ENCODE measurements at regions of chr9 and their contacts with region 1.

Region 1: DNA sequence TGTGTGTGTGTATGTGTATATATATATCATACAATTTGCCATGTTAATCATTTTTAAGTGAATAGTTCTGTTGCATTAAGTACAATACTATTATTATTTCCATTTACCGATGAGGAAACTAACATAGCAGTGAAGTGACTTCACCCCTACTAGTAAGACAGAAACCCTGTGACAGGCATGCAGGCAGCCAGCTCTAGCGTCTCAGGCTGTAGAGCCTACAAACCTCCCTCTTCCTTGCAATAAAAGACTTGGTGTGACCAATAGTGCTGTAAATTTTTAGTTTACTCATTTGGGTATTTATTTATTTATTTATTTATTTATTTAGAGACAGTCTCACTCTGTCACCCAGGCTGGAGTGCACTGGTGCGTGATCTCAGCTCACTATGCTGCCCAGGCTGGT is 24.7 kb downstream of the FNBP1 start:
- DNase-seq: no peak
- H3K4me3 Mint-ChIP-seq: no peak overlapping the region
- H3K27ac Mint-ChIP-seq: peak overlapping the region; percentile 54
- H3K4me1 Mint-ChIP-seq: peaks cover 67% of the 10 kb centered on the region
- H3K27me3 Mint-ChIP-seq: no peaks in the 10 kb centered on the region

Region 2: GRCh38 chr9:129835021-129835871 is 183.0 kb before region 1 on chr9 and contains the starts of genes C9orf78 and USP20:
- CTCF ChIA-PET with region 1: no interaction called
- POLR2A ChIA-PET with region 1: no interaction called
- DNase-seq: peak; percentile 97
- H3K4me3 Mint-ChIP-seq: peak within 1 kb of the TSS; percentile 99
- H3K27ac Mint-ChIP-seq: peak within 1 kb of the TSS; percentile 96
- H3K4me1 Mint-ChIP-seq: peaks cover 59% of the 10 kb centered on the region
- H3K27me3 Mint-ChIP-seq: no peaks in the 10 kb centered on the region
- total RNA-seq, gene C9orf78: 61.6 to 66.2 TPM
- total RNA-seq, gene USP20: 86.4 to 87.6 TPM

Region 3: DNA sequence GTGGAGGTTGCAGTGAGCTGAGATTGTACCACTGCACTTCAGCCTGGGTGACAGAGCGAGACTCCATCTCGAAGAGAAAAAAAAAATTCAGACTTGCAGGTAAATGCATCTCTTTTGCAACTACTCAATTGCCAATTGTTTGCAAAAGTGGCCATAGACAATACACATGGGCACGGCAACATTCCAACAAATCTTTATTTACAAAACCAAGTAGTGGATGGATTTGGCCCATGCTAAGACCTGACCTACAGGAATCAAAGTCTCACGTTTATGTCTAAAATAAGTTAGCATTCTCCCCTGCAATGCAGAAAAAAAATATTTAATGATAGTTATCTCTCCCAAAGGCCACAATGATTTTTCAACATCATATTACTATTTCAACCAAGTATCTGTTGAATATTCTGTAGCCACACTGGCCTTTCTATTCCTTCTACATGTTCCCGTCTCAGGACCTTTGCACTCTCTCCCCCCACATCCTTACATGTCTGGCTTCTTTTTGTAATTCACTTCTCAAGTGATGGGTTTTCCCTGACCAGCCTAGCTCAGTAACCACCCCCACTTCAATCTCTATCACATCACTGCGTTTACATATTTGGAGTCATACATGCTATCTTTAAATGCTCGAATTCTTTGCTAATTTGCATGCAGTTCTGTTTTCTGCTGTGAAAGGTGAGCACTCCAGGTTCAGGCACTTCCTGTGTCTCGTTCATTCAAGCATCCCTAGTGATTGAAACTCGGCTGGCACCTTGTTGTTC is 29.5 kb before region 1 on chr9:
- CTCF ChIA-PET with region 1: no interaction called
- POLR2A ChIA-PET with region 1: interaction called, 11 read pairs
- DNase-seq: no peak
- H3K4me3 Mint-ChIP-seq: no peak overlapping the region
- H3K27ac Mint-ChIP-seq: peak overlapping the region; percentile 72
- H3K4me1 Mint-ChIP-seq: peaks cover 75% of the 10 kb centered on the region
- H3K27me3 Mint-ChIP-seq: no peaks in the 10 kb centered on the region